ENCODE measurements at regions of chr9 and their contacts with region 1.

Region 1: GRCh38 chr9:86589273-86589672 is 235.1 kb upstream of the TUT7 start:
- DNase-seq: peak in 1 of 2 experiments; percentile 63
- H3K4me3 ChIP-seq: no peak overlapping the region
- H3K27ac ChIP-seq: no peak overlapping the region
- H3K4me1 ChIP-seq: no peaks in the 10 kb centered on the region
- H3K27me3 ChIP-seq: no peaks in the 10 kb centered on the region
- CTCF ChIP-seq: peak; percentile 56 to 69 (median 60)
- EP300 ChIP-seq: no peak
- POLR2A ChIP-seq: no peak
- RAD21 ChIP-seq: peak; percentile 66 to 76

Region 2: DNA sequence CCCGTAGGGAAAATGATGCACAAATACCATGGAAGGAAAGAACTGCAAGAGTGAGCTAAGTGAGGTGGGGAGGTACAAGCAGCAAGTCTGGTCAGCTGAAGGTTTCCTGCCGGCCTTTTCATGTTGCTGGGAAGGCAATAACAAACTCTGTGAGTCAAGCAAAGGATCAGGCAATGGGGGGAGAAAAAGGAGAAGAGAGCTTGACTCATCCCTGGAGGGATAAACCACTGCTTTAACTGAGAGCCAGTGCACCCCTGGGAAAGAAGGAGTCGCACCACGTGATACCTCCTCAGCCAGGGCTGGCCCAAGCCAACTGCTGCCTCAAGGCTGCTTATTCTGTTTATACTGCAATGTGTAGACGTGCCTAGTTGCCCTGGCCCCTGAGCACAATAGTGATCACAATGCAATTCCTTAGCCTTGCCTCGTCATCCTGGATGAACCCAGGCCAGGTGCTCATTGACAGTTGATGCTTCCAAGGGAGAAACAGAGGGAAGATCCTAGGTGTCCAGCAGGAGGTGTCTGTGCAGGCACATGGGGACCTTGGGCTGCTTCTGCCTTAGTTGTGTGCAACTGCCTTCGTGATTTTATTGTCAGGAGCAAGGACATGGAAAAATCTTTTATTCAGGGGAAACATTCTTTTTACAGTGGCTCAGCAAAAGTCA is 32.1 kb before region 1 on chr9:
- CTCF ChIA-PET with region 1: no interaction called
- POLR2A ChIA-PET with region 1: no interaction called
- DNase-seq: no peak
- H3K4me3 ChIP-seq: no peak overlapping the region
- H3K27ac ChIP-seq: no peak overlapping the region
- H3K4me1 ChIP-seq: peaks cover 0 to 3% (median 0%) of the 10 kb centered on the region in 4 experiments; a peak in 1 of 7 replicates
- H3K27me3 ChIP-seq: no peaks in the 10 kb centered on the region
- CTCF ChIP-seq: no peak
- EP300 ChIP-seq: no peak
- POLR2A ChIP-seq: no peak
- RAD21 ChIP-seq: peak; percentile 2 to 12; a peak in 2 of 4 replicates

Region 3: DNA sequence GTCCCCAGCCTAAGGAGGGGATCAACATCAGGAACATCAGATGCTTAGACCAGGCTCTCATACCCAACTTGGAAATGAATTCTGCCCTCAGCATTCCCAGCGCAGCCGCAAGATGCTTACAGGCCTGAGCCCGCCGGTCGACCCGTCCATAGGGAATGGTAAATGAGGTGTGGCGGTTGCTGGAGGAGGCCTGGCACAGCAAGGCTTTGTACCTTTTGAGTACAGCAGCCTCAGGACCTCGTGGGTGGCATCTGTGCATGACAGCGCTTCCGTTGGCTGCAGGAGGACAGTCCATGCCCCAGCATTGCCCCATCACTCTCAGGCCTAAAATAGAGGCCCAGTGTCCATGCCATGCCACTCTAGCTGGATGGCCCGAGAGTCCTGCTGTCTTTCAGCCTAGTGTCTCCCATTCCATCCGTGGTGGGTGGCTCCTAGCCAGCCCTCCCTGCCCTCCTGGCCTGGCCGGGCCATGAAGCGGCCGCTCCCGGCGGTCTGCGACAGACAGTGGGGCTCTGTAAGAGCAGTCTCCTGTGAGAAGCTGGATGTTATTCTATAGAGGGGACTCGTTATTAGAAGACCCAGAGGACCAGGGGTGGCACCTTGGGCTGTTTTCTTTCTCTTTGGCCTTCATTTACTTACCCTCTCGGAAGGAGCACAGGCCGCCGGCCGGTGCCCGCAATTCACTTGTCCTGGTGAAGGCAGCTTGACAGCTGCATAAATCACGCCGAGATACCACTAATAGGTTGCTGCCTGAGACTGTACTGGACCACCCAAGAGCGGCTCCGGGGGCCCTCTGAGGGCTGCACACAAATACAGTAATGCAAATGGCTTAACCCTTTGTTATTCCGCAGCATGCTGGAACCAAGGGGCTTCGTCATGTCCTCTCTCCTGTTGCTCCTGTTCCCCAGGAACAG is 11.6 kb before region 1 on chr9:
- CTCF ChIA-PET with region 1: interaction called, 10 read pairs
- POLR2A ChIA-PET with region 1: no interaction called
- DNase-seq: peak in 1 of 2 experiments; percentile 47
- H3K4me3 ChIP-seq: no peak overlapping the region
- H3K27ac ChIP-seq: no peak overlapping the region
- H3K4me1 ChIP-seq: peaks cover 2 to 14% (median 5%) of the 10 kb centered on the region in 4 experiments; a peak in 6 of 7 replicates
- H3K27me3 ChIP-seq: no peaks in the 10 kb centered on the region; a peak in 1 of 7 replicates
- CTCF ChIP-seq: no peak
- EP300 ChIP-seq: no peak
- POLR2A ChIP-seq: no peak
- RAD21 ChIP-seq: no peak

Region 4: GRCh38 chr9:86600291-86600690 is 11.0 kb after region 1 on chr9:
- CTCF ChIA-PET with region 1: interaction called, 20 read pairs
- POLR2A ChIA-PET with region 1: no interaction called
- DNase-seq: no peak
- H3K4me3 ChIP-seq: no peak overlapping the region
- H3K27ac ChIP-seq: no peak overlapping the region
- H3K4me1 ChIP-seq: peaks cover 0 to 3% (median 2%) of the 10 kb centered on the region in 4 experiments; a peak in 4 of 7 replicates
- H3K27me3 ChIP-seq: peaks cover 0 to 3% (median 0%) of the 10 kb centered on the region in 4 experiments; a peak in 1 of 7 replicates
- CTCF ChIP-seq: no peak
- EP300 ChIP-seq: no peak
- POLR2A ChIP-seq: no peak
- RAD21 ChIP-seq: no peak